Activated T-helper 2 cell treated with anti-CD3 and anti-CD28 coated beads, Interferon-gamma antibody, Interleukin-2, Interleukin-4, amounts not matched to agents 10 μg/mL and 5 μg/mL and 100 μg/mL, durations not matched to agents 14 hours and 24 hours and 36 hours (primary cell): ENCODE measurements at regions of chr1 and their contacts with region 1.

Region 1: GRCh38 chr1:207797229-207797961 is 45.5 kb downstream of the CD46 start:
- DNase-seq: peak; percentile 61
- H3K4me3 Mint-ChIP-seq: no peak overlapping the region
- H3K27ac Mint-ChIP-seq: peak overlapping the region; percentile 12
- H3K4me1 Mint-ChIP-seq: peaks cover 38% of the 10 kb centered on the region
- H3K27me3 Mint-ChIP-seq: no peaks in the 10 kb centered on the region

Region 2: DNA sequence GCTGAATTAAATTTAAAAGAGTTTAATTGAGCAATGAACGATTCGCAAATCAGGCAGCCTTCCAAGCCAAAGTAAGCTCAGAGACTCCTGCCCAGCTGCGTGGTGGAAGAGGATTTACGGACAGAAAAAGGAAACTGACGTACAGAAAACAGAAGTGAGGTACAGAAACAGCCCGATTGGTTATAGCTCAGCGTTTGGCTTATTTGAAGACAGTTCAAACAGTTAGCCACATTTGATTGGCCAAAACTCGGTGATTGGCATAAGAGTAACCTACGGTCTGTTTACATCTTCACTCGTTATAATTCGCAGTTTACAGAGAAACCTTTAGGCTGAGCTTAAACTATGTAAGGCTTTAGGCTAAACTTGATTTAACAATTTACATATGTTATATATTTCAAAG is 105.6 kb before region 1 on chr1:
- intact Hi-C with region 1: no loop called
- DNase-seq: no peak
- H3K4me3 Mint-ChIP-seq: no peak overlapping the region
- H3K27ac Mint-ChIP-seq: no peak overlapping the region
- H3K4me1 Mint-ChIP-seq: no peaks in the 10 kb centered on the region
- H3K27me3 Mint-ChIP-seq: peaks cover 35% of the 10 kb centered on the region

Region 3: DNA sequence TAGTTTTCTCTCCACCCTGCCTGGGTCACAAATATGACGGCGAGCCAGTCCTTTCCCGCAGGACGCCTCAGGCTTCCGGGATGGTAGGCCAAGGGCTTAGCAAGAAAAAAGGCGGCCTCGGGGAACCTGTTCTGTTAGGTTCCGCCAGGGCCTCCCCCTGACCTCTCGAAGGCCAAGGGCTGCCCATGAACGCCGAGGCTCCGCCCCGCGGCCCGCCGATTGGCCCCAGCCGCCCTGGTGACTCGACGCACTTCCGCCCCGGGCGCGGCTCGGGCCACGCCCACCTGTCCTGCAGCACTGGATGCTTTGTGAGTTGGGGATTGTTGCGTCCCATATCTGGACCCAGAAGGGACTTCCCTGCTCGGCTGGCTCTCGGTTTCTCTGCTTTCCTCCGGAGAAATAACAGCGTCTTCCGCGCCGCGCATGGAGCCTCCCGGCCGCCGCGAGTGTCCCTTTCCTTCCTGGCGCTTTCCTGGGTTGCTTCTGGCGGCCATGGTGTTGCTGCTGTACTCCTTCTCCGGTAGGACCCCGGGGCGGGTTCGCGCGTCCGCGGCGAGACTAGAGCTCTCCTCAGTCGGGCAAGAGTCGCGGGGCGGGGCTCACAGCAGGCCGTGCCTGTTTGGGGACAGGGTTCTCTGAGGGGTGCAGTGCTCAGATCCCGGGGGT is 45.5 kb before region 1 on chr1 and contains the start of gene CD46:
- intact Hi-C with region 1: loop called (anchors 5 kb)
- DNase-seq: peak; percentile 92
- H3K4me3 Mint-ChIP-seq: peak within 1 kb of the TSS; percentile 95
- H3K27ac Mint-ChIP-seq: peak within 1 kb of the TSS; percentile 96
- H3K4me1 Mint-ChIP-seq: peaks cover 60% of the 10 kb centered on the region
- H3K27me3 Mint-ChIP-seq: no peaks in the 10 kb centered on the region
- total RNA-seq, gene CD46: 113 and 116 TPM in 2 replicates

Region 4: GRCh38 chr1:207815913-207816291 is 18.5 kb after region 1 on chr1:
- intact Hi-C with region 1: loop called (anchors 2 kb)
- DNase-seq: no peak
- H3K4me3 Mint-ChIP-seq: no peak overlapping the region
- H3K27ac Mint-ChIP-seq: peak overlapping the region; percentile 78
- H3K4me1 Mint-ChIP-seq: peaks cover 41% of the 10 kb centered on the region
- H3K27me3 Mint-ChIP-seq: no peaks in the 10 kb centered on the region

Region 5: GRCh38 chr1:207963427-207964194 is 166.2 kb after region 1 on chr1:
- intact Hi-C with region 1: loop called (anchors 1 kb)
- DNase-seq: peak; percentile 80
- H3K4me3 Mint-ChIP-seq: peak overlapping the region; percentile 76
- H3K27ac Mint-ChIP-seq: no peak overlapping the region
- H3K4me1 Mint-ChIP-seq: peaks cover 11% of the 10 kb centered on the region
- H3K27me3 Mint-ChIP-seq: peaks cover 44% of the 10 kb centered on the region